Activated naive CD4-positive, alpha-beta T cell treated with anti-CD3 and anti-CD28 coated beads for 36 hours (primary cell): ENCODE measurements at regions of chr1 and their contacts with region 1.

Region 1: GRCh38 chr1:222814536-222815439 is at the start of gene DISP1:
- DNase-seq: peak; percentile 85
- H3K4me3 Mint-ChIP-seq: peak within 1 kb of the TSS; percentile 88
- H3K27ac Mint-ChIP-seq: peak within 1 kb of the TSS; percentile 82
- H3K4me1 Mint-ChIP-seq: peaks cover 21% of the 10 kb centered on the region
- H3K27me3 Mint-ChIP-seq: no peaks in the 10 kb centered on the region
- total RNA-seq, gene DISP1: 0.93 to 0.94 TPM

Region 2: GRCh38 chr1:222861062-222861461 is 46.3 kb after region 1 on chr1:
- CTCF ChIA-PET with region 1: no interaction called
- intact Hi-C with region 1: no loop called
- DNase-seq: no peak
- H3K4me3 Mint-ChIP-seq: no peak overlapping the region
- H3K27ac Mint-ChIP-seq: no peak overlapping the region
- H3K4me1 Mint-ChIP-seq: peaks cover 8% of the 10 kb centered on the region
- H3K27me3 Mint-ChIP-seq: no peaks in the 10 kb centered on the region

Region 3: GRCh38 chr1:222880586-222880985 is 65.8 kb after region 1 on chr1:
- CTCF ChIA-PET with region 1: no interaction called
- intact Hi-C with region 1: loop called (anchors 1 kb)
- DNase-seq: peak; percentile 52
- H3K4me3 Mint-ChIP-seq: no peak overlapping the region
- H3K27ac Mint-ChIP-seq: peak overlapping the region; percentile 53
- H3K4me1 Mint-ChIP-seq: peaks cover 23% of the 10 kb centered on the region
- H3K27me3 Mint-ChIP-seq: no peaks in the 10 kb centered on the region

Region 4: GRCh38 chr1:222897527-222898190 is 82.9 kb after region 1 on chr1:
- CTCF ChIA-PET with region 1: no interaction called
- intact Hi-C with region 1: loop called (anchors 2 kb)
- DNase-seq: no peak
- H3K4me3 Mint-ChIP-seq: peak overlapping the region; percentile 53
- H3K27ac Mint-ChIP-seq: peak overlapping the region; percentile 56
- H3K4me1 Mint-ChIP-seq: peaks cover 23% of the 10 kb centered on the region
- H3K27me3 Mint-ChIP-seq: no peaks in the 10 kb centered on the region